H1 (cell line): ENCODE measurements at regions of chr4 and their contacts with region 1.

Region 1: DNA sequence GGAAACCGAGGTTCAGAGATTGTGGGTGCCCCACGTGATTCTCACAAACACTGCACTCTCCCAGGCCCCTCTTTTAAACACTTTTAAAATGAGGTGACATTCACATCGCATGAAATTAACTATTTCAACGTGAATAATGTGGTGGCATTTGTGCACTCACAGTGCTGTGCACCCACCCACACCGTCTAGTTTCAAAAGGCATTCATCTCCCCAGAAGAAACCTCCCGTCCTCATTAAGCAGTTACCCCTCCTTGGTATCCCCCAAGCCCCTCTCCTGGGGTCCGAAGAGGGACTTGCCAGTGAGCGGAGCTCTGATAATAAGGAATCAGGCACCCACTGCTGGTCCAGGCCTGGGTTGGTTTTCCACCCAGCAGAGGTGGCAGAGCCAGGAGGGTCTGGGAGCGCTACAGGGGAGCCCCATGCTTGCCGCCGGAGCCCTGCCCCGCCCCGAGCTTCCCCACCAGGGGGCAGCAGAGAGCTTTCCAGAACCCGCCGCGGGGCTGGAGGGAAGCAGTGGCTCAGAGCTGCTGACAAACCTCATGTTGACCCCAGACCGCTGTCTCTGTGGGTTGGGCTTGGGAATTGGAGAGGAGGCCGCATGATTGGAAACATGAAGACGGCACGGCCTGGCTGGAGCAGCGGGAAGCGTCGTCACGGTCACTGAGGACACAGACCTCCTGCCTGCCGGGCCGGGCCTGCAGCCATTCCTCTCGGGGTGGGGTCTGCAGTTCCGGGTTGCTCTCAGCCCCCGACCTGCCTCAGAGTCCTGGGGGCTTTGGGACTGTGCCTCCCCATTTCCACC is 27.5 kb upstream of the HTRA3 start:
- DNase-seq: peak; percentile 76 to 100
- H3K4me3 ChIP-seq: no peak overlapping the region
- H3K27ac ChIP-seq: no peak overlapping the region
- H3K4me1 ChIP-seq: peaks cover 0 to 8% (median 3%) of the 10 kb centered on the region in 4 experiments; a peak in 6 of 7 replicates
- H3K27me3 ChIP-seq: no peaks in the 10 kb centered on the region
- CTCF ChIP-seq: peak in 2 of 3 experiments; percentile 87 to 97; a peak in 3 of 4 replicates
- EP300 ChIP-seq: no peak
- POLR2A ChIP-seq: no peak
- RAD21 ChIP-seq: peak; percentile 94 to 96

Region 2: GRCh38 chr4:8215001-8215427 is 27.1 kb before region 1 on chr4:
- CTCF ChIA-PET with region 1: interaction called, 20 read pairs
- POLR2A ChIA-PET with region 1: no interaction called
- DNase-seq: no peak
- H3K4me3 ChIP-seq: no peak overlapping the region
- H3K27ac ChIP-seq: no peak overlapping the region
- H3K4me1 ChIP-seq: peaks cover 0 to 8% (median 0%) of the 10 kb centered on the region in 4 experiments; a peak in 1 of 7 replicates
- H3K27me3 ChIP-seq: no peaks in the 10 kb centered on the region
- CTCF ChIP-seq: no peak
- EP300 ChIP-seq: no peak
- POLR2A ChIP-seq: no peak
- RAD21 ChIP-seq: no peak

Region 3: DNA sequence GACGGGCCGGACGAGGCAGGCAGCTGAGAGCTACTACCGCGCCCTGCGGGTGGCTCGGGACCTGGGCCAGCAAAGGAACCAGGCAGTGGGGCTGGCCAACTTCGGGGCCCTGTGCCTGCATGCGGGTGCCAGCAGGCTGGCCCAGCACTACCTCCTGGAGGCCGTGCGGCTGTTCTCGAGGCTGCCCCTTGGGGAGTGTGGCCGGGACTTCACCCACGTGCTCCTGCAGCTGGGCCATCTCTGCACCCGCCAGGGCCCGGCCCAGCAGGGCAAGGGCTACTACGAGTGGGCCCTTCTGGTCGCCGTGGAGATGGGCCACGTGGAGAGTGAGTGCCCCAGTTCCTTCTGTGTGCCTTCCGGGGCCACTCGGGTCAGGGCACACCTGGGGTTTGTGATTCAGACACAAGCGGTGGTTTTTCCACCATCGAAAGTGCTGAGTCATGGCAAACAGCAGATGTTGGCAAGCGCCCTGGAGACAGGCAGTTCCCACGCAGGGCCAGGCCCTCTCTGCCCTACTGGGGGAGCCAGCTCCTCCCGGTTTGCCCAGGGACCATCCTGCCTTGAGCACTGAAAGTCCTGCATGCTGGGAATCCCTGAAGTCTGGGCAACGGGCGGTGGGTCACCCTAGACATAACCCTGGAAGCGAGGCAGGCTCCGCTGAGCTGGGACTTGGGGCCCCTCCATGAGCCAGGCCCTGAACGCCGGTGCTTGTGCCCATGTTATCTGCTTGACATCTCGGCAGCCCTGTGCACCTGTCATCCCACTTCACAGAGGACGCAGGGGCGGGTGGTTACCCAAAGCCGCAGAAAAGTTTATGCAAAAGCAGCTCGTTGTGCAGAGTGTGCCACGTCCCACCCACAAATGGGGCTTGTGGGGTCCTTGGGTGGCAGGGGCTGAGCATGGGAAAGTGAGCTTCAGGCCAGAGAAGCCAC is 13.5 kb before region 1 on chr4:
- CTCF ChIA-PET with region 1: interaction called, 27 read pairs
- POLR2A ChIA-PET with region 1: no interaction called
- DNase-seq: no peak
- H3K4me3 ChIP-seq: no peak overlapping the region
- H3K27ac ChIP-seq: no peak overlapping the region
- H3K4me1 ChIP-seq: peaks cover 6 to 17% (median 11%) of the 10 kb centered on the region in 4 experiments
- H3K27me3 ChIP-seq: no peaks in the 10 kb centered on the region; a peak in 1 of 7 replicates
- CTCF ChIP-seq: no peak
- EP300 ChIP-seq: no peak
- POLR2A ChIP-seq: no peak
- RAD21 ChIP-seq: no peak

Region 4: GRCh38 chr4:8410641-8411271 is 168.7 kb after region 1 on chr4:
- CTCF ChIA-PET with region 1: interaction called, 33 read pairs
- POLR2A ChIA-PET with region 1: no interaction called
- DNase-seq: peak; percentile 53 to 85
- H3K4me3 ChIP-seq: no peak overlapping the region
- H3K27ac ChIP-seq: no peak overlapping the region
- H3K4me1 ChIP-seq: peaks cover 0 to 5% (median 4%) of the 10 kb centered on the region in 4 experiments; a peak in 6 of 7 replicates
- H3K27me3 ChIP-seq: no peaks in the 10 kb centered on the region
- CTCF ChIP-seq: peak in 2 of 3 experiments; percentile 62 to 73; a peak in 3 of 4 replicates
- EP300 ChIP-seq: no peak
- POLR2A ChIP-seq: no peak
- RAD21 ChIP-seq: peak; percentile 64 to 74

Region 5: DNA sequence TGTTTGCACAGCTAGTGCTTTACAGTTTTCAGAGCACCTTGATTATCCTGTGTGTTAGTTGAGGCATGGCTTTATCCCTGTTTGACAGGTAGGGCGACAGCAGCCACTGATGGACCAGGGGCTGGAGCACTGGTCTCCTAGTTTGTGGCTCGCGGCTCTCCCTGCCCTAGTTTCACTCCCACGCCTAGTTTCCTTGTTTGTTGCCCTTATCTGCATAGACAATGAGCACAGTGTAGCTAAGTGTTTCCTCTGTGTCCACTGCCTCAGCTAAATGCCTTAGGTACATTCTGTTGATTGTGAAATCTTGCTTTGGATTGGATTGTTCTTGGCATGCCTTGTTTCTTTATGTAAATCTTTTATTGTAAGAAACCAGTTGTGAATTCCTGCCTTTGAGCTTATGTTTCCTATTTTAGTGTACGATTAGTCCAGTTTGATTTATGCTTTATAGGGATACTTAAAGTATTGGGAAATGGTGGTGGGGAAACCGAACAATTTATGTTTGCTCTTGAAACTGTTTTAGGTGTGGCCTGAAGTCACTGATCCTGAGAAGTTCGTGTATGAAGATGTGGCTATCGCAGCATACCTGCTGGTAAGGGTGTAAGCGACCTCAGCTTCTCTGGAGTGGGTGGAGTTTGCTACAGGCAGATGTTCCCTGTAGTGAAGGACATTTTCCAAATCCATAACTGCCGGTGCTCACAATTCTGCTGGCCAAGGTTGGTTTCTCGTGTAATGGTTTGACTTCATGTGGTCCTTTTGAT is 209.5 kb after region 1 on chr4:
- CTCF ChIA-PET with region 1: no interaction called
- POLR2A ChIA-PET with region 1: no interaction called
- DNase-seq: no peak
- H3K4me3 ChIP-seq: no peak overlapping the region
- H3K27ac ChIP-seq: no peak overlapping the region
- H3K4me1 ChIP-seq: no peaks in the 10 kb centered on the region
- H3K27me3 ChIP-seq: no peaks in the 10 kb centered on the region; a peak in 1 of 7 replicates
- CTCF ChIP-seq: no peak
- EP300 ChIP-seq: no peak
- POLR2A ChIP-seq: no peak
- RAD21 ChIP-seq: no peak